ENCODE measurements at regions of chr21 and their contacts with region 1.

Region 1: GRCh38 chr21:25385911-25386474 is 221.3 kb downstream of the MRPL39 start:
- DNase-seq: no peak
- ATAC-seq: peak; percentile 58
- H3K4me3 Mint-ChIP-seq: no peak overlapping the region
- H3K27ac Mint-ChIP-seq: no peak overlapping the region
- H3K4me1 Mint-ChIP-seq: peaks cover 15% of the 10 kb centered on the region
- H3K27me3 Mint-ChIP-seq: no peaks in the 10 kb centered on the region
- CTCF ChIP-seq: peak; percentile 99

Region 2: GRCh38 chr21:23968722-23969647 is 1417.0 kb before region 1 on chr21:
- CTCF ChIA-PET with region 1: no interaction called
- POLR2A ChIA-PET with region 1: no interaction called
- intact Hi-C with region 1: loop called (anchors 2 kb)
- DNase-seq: peak; percentile 51
- ATAC-seq: peak; percentile 92
- H3K4me3 Mint-ChIP-seq: peak overlapping the region; percentile 76
- H3K27ac Mint-ChIP-seq: peak overlapping the region; percentile 81
- H3K4me1 Mint-ChIP-seq: peaks cover 18% of the 10 kb centered on the region
- H3K27me3 Mint-ChIP-seq: no peaks in the 10 kb centered on the region
- CTCF ChIP-seq: no peak

Region 3: GRCh38 chr21:24375201-24375600 is 1010.8 kb before region 1 on chr21:
- CTCF ChIA-PET with region 1: no interaction called
- POLR2A ChIA-PET with region 1: no interaction called
- intact Hi-C with region 1: loop called (anchors 1 kb)
- DNase-seq: no peak
- ATAC-seq: peak; percentile 49
- H3K4me3 Mint-ChIP-seq: no peak overlapping the region
- H3K27ac Mint-ChIP-seq: no peak overlapping the region
- H3K4me1 Mint-ChIP-seq: no peaks in the 10 kb centered on the region
- H3K27me3 Mint-ChIP-seq: no peaks in the 10 kb centered on the region
- CTCF ChIP-seq: no peak

Region 4: DNA sequence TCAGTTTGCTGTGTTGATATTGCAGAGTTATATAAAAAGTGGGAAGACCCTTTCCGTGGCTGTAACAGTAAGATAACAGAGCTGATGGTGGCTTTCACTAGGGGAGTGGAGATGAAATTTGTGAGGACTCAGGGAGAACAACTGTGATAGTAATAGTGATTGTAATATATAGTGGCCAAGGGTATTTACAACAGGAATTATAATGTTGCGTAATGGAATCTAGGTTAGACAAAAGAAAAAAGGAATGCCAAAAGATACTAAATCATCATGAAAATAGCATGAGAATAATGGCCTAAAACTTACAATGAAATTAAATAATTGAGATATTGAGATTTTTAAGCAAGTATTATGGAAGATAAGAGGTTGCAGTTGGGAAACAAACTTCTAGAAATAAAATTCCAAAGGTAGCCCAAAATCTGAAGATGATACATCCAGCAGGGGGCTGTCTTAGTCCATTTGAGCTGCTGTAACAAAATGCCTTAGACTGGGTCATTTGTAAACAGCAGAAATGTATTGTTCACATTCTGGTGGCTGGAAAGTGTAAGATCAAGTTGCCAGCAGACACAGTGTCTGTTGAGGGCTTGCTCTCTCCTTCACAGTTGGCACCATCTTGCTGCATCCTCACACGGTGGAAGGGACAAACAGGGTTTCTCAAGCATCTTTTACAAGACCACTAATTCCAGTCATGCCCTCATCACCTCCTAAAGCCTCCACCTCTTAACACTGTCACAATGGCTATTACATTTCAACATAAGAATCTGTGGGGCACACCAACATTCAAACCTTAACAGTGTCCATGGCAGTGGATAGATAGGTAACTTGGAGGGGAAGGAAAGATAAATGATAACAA is 489.9 kb before region 1 on chr21:
- CTCF ChIA-PET with region 1: interaction called, 30 read pairs
- POLR2A ChIA-PET with region 1: interaction called, 3 read pairs
- intact Hi-C with region 1: loop called (anchors 1 kb)
- DNase-seq: no peak
- ATAC-seq: peak; percentile 69
- H3K4me3 Mint-ChIP-seq: no peak overlapping the region
- H3K27ac Mint-ChIP-seq: peak overlapping the region; percentile 4
- H3K4me1 Mint-ChIP-seq: peaks cover 21% of the 10 kb centered on the region
- H3K27me3 Mint-ChIP-seq: no peaks in the 10 kb centered on the region
- CTCF ChIP-seq: no peak

Region 5: GRCh38 chr21:25054689-25055088 is 331.3 kb before region 1 on chr21:
- CTCF ChIA-PET with region 1: no interaction called
- POLR2A ChIA-PET with region 1: interaction called, 11 read pairs
- intact Hi-C with region 1: no loop called
- DNase-seq: no peak
- ATAC-seq: peak; percentile 45
- H3K4me3 Mint-ChIP-seq: no peak overlapping the region
- H3K27ac Mint-ChIP-seq: no peak overlapping the region
- H3K4me1 Mint-ChIP-seq: peaks cover 14% of the 10 kb centered on the region
- H3K27me3 Mint-ChIP-seq: no peaks in the 10 kb centered on the region
- CTCF ChIP-seq: no peak

Region 6: GRCh38 chr21:25350056-25350455 is 35.9 kb before region 1 on chr21:
- CTCF ChIA-PET with region 1: no interaction called
- POLR2A ChIA-PET with region 1: no interaction called
- intact Hi-C with region 1: loop called (anchors 1 kb)
- DNase-seq: no peak
- ATAC-seq: no peak
- H3K4me3 Mint-ChIP-seq: no peak overlapping the region
- H3K27ac Mint-ChIP-seq: no peak overlapping the region
- H3K4me1 Mint-ChIP-seq: peaks cover 4% of the 10 kb centered on the region
- H3K27me3 Mint-ChIP-seq: no peaks in the 10 kb centered on the region
- CTCF ChIP-seq: no peak

Measured in activated B cell treated with CpG ODN at 0.5 μM for 24 hours (primary cell).